ENCODE measurements at regions of chr10 and their contacts with region 1.

Region 1: GRCh38 chr10:75235375-75236177 is at the start of gene COMTD1:
- DNase-seq: peak; percentile 82 to 96 (median 91)
- ATAC-seq: peak; percentile 82
- H3K4me3 ChIP-seq: peak within 1 kb of the TSS; percentile 80
- H3K4me3 Mint-ChIP-seq: peak within 1 kb of the TSS; percentile 74 to 88 (median 82)
- H3K27ac ChIP-seq: peak within 1 kb of the TSS; percentile 78
- H3K27ac Mint-ChIP-seq: peak within 1 kb of the TSS; percentile 73 to 97 (median 86)
- H3K4me1 ChIP-seq: peaks cover 4 to 11% of the 10 kb centered on the region in 2 donors
- H3K4me1 Mint-ChIP-seq: peaks cover 10 to 23% (median 16%) of the 10 kb centered on the region in 7 donors
- H3K27me3 ChIP-seq: no peaks in the 10 kb centered on the region
- H3K27me3 Mint-ChIP-seq: no peaks in the 10 kb centered on the region
- total RNA-seq, gene COMTD1: 10.1 to 29.2 (median 15.8) TPM

Region 2: GRCh38 chr10:73879296-73880173 is 1356.0 kb before region 1 on chr10:
- CTCF ChIA-PET with region 1: no interaction called
- POLR2A ChIA-PET with region 1: no interaction called
- intact Hi-C with region 1: loop called in 1 of 2 experiments (anchors 10 kb)
- DNase-seq: peak; percentile 91 to 98 (median 96)
- ATAC-seq: peak; percentile 97
- H3K4me3 ChIP-seq: no peak overlapping the region
- H3K4me3 Mint-ChIP-seq: peak overlapping the region in 5 of 10 donors; percentile 0 to 40 (median 1)
- H3K27ac ChIP-seq: peak overlapping the region; percentile 68
- H3K27ac Mint-ChIP-seq: peak overlapping the region; percentile 30 to 98 (median 89)
- H3K4me1 ChIP-seq: peaks cover 18 to 22% of the 10 kb centered on the region in 2 donors
- H3K4me1 Mint-ChIP-seq: peaks cover 14 to 51% (median 41%) of the 10 kb centered on the region in 7 donors
- H3K27me3 ChIP-seq: no peaks in the 10 kb centered on the region
- H3K27me3 Mint-ChIP-seq: peaks cover 0 to 5% (median 0%) of the 10 kb centered on the region in 5 donors

Region 3: GRCh38 chr10:74244097-74244685 is 991.4 kb before region 1 on chr10:
- CTCF ChIA-PET with region 1: interaction called, 5 read pairs
- POLR2A ChIA-PET with region 1: no interaction called
- intact Hi-C with region 1: loop called (anchors 1 to 5 kb)
- DNase-seq: peak in 5 of 9 donors; percentile 5 to 45 (median 34)
- ATAC-seq: no peak
- H3K4me3 ChIP-seq: no peak overlapping the region
- H3K4me3 Mint-ChIP-seq: no peak overlapping the region
- H3K27ac ChIP-seq: no peak overlapping the region
- H3K27ac Mint-ChIP-seq: no peak overlapping the region
- H3K4me1 ChIP-seq: no peaks in the 10 kb centered on the region
- H3K4me1 Mint-ChIP-seq: peaks cover 0 to 2% (median 0%) of the 10 kb centered on the region in 7 donors
- H3K27me3 ChIP-seq: no peaks in the 10 kb centered on the region
- H3K27me3 Mint-ChIP-seq: no peaks in the 10 kb centered on the region

Region 4: GRCh38 chr10:74738985-74739567 is 496.5 kb before region 1 on chr10:
- CTCF ChIA-PET with region 1: no interaction called
- POLR2A ChIA-PET with region 1: no interaction called
- intact Hi-C with region 1: loop called in 1 of 2 experiments (anchors 2 kb)
- DNase-seq: peak in 7 of 9 donors; percentile 4 to 40 (median 17)
- ATAC-seq: peak; percentile 73
- H3K4me3 ChIP-seq: no peak overlapping the region
- H3K4me3 Mint-ChIP-seq: peak overlapping the region in 9 of 10 donors; percentile 17 to 56 (median 34)
- H3K27ac ChIP-seq: no peak overlapping the region
- H3K27ac Mint-ChIP-seq: peak overlapping the region; percentile 44 to 87 (median 58)
- H3K4me1 ChIP-seq: peaks cover 7 to 15% of the 10 kb centered on the region in 2 donors
- H3K4me1 Mint-ChIP-seq: peaks cover 15 to 26% (median 17%) of the 10 kb centered on the region in 7 donors
- H3K27me3 ChIP-seq: no peaks in the 10 kb centered on the region
- H3K27me3 Mint-ChIP-seq: no peaks in the 10 kb centered on the region

Region 5: DNA sequence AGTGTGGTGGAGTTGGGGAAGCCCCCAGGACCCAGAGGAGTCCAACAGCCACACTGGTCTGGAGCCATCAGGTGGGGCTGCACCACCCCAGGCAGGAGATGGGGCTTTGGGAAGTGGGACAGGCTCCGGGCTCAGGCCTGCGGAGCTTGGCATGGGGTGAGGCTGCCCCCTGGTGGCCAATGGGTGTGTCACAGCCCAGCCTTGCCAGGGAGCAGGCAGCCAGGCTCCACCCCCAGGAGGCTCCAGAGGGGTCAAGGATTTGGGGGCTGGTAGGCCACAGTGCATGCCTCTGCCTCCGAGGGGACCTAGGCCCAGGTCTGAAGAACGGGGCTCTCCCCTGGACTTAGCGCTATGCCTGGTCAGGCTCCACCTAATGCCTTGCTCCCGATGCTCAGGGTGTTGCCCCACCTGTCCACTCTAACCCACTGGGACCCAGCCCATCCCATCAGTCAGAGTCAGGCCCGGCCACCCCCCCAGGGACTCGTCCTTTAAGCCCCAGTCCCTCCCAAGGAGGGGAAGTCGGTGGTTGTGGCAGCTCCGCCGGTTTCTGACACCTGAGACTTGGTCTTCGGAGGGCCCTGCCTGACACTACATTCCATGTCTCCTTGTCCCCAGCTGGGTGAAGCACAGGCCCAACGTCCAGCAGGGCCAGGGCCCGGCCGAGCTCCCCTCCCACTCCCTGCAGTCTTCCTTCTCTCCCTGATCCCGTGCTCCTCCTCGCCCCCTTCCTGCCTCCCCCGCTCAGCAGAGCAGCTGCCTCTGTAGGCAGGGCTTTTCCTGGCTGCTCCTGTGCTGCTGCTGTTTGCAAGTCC is 135.4 kb before region 1 on chr10:
- CTCF ChIA-PET with region 1: no interaction called
- POLR2A ChIA-PET with region 1: no interaction called
- intact Hi-C with region 1: loop called in 1 of 2 experiments (anchors 1 kb)
- DNase-seq: peak; percentile 55 to 88 (median 70)
- ATAC-seq: peak; percentile 95
- H3K4me3 ChIP-seq: no peak overlapping the region
- H3K4me3 Mint-ChIP-seq: no peak overlapping the region
- H3K27ac ChIP-seq: no peak overlapping the region
- H3K27ac Mint-ChIP-seq: no peak overlapping the region
- H3K4me1 ChIP-seq: peaks cover 0 to 3% of the 10 kb centered on the region in 2 donors
- H3K4me1 Mint-ChIP-seq: peaks cover 0 to 7% (median 0%) of the 10 kb centered on the region in 7 donors
- H3K27me3 ChIP-seq: no peaks in the 10 kb centered on the region
- H3K27me3 Mint-ChIP-seq: no peaks in the 10 kb centered on the region

Region 6: GRCh38 chr10:75253281-75254220 is 18.0 kb after region 1 on chr10:
- CTCF ChIA-PET with region 1: no interaction called
- POLR2A ChIA-PET with region 1: no interaction called
- intact Hi-C with region 1: no loop called
- DNase-seq: no peak
- ATAC-seq: no peak
- H3K4me3 ChIP-seq: no peak overlapping the region
- H3K4me3 Mint-ChIP-seq: no peak overlapping the region
- H3K27ac ChIP-seq: no peak overlapping the region
- H3K27ac Mint-ChIP-seq: no peak overlapping the region
- H3K4me1 ChIP-seq: no peaks in the 10 kb centered on the region
- H3K4me1 Mint-ChIP-seq: no peaks in the 10 kb centered on the region
- H3K27me3 ChIP-seq: no peaks in the 10 kb centered on the region
- H3K27me3 Mint-ChIP-seq: peaks cover 0 to 7% (median 0%) of the 10 kb centered on the region in 5 donors

Region 7: GRCh38 chr10:75294866-75295701 is 59.5 kb after region 1 on chr10:
- CTCF ChIA-PET with region 1: interaction called, 5 read pairs
- POLR2A ChIA-PET with region 1: interaction called, 3 read pairs
- intact Hi-C with region 1: loop called in 1 of 2 experiments (anchors 2 kb)
- DNase-seq: peak; percentile 24 to 70 (median 58)
- ATAC-seq: peak; percentile 84
- H3K4me3 ChIP-seq: peak overlapping the region; percentile 59
- H3K4me3 Mint-ChIP-seq: peak overlapping the region in 5 of 10 donors; percentile 79 to 87 (median 84)
- H3K27ac ChIP-seq: peak overlapping the region; percentile 49
- H3K27ac Mint-ChIP-seq: peak overlapping the region in 4 of 9 donors; percentile 65 to 82 (median 74)
- H3K4me1 ChIP-seq: no peaks in the 10 kb centered on the region
- H3K4me1 Mint-ChIP-seq: peaks cover 0 to 4% (median 0%) of the 10 kb centered on the region in 7 donors
- H3K27me3 ChIP-seq: peaks cover 0 to 3% of the 10 kb centered on the region in 2 donors
- H3K27me3 Mint-ChIP-seq: peaks cover under 1 to 34% (median 6%) of the 10 kb centered on the region in 5 donors

Measured in naive thymus-derived CD4-positive, alpha-beta T cell (primary cell).